PC-3 (cell line): ENCODE measurements at regions of chr2 and their contacts with region 1.

Region 1: GRCh38 chr2:178870703-178871102 is 63.5 kb upstream of the TTN start:
- DNase-seq: peak; percentile 82
- ATAC-seq: peak; percentile 76
- H3K4me3 ChIP-seq: no peak overlapping the region
- H3K27ac ChIP-seq: peak overlapping the region; percentile 4; the same call in 1 of the 2 replicates
- H3K4me1 ChIP-seq: peaks cover 48% of the 10 kb centered on the region
- H3K27me3 ChIP-seq: no peaks in the 10 kb centered on the region
- CTCF ChIP-seq: no peak

Region 2: DNA sequence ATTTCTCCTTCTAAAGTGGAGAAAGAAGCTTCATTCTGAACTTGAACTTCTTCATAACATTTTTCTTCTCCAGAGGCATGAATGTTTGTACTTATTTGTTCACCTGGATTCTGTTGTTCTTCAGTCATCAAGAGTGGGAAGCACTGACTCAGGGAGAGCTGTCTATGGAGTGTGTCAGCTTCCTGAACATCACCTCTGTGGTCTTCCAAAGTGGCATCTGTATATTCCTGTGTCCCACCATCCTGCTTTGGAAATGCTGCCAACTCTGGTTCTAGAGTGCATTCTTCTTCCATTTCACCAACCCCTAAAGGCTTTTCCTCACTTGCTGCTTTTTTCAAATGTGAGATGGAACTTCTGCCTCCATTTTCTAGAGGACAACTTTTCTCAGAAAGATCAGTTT is 122.9 kb before region 1 on chr2:
- CTCF ChIA-PET with region 1: no interaction called
- POLR2A ChIA-PET with region 1: no interaction called
- intact Hi-C with region 1: no loop called
- DNase-seq: peak; percentile 77
- ATAC-seq: peak; percentile 73
- H3K4me3 ChIP-seq: no peak overlapping the region
- H3K27ac ChIP-seq: no peak overlapping the region
- H3K4me1 ChIP-seq: peaks cover 12% of the 10 kb centered on the region
- H3K27me3 ChIP-seq: peaks cover 13% of the 10 kb centered on the region; the same call in 1 of the 2 replicates
- CTCF ChIP-seq: no peak

Region 3: GRCh38 chr2:178805457-178805856 is 65.2 kb before region 1 on chr2:
- CTCF ChIA-PET with region 1: no interaction called
- POLR2A ChIA-PET with region 1: interaction called, 30 read pairs
- intact Hi-C with region 1: no loop called
- DNase-seq: no peak
- ATAC-seq: no peak
- H3K4me3 ChIP-seq: no peak overlapping the region
- H3K27ac ChIP-seq: no peak overlapping the region
- H3K4me1 ChIP-seq: no peaks in the 10 kb centered on the region
- H3K27me3 ChIP-seq: no peaks in the 10 kb centered on the region
- CTCF ChIP-seq: no peak

Region 4: GRCh38 chr2:178830451-178830850 is 40.3 kb before region 1 on chr2:
- CTCF ChIA-PET with region 1: no interaction called
- POLR2A ChIA-PET with region 1: no interaction called
- intact Hi-C with region 1: loop called (anchors 2 kb)
- DNase-seq: peak; percentile 49
- ATAC-seq: peak; percentile 77
- H3K4me3 ChIP-seq: no peak overlapping the region; the same call in 1 of the 2 replicates
- H3K27ac ChIP-seq: peak overlapping the region; percentile 68
- H3K4me1 ChIP-seq: peaks cover 23% of the 10 kb centered on the region
- H3K27me3 ChIP-seq: no peaks in the 10 kb centered on the region
- CTCF ChIP-seq: no peak

Region 5: DNA sequence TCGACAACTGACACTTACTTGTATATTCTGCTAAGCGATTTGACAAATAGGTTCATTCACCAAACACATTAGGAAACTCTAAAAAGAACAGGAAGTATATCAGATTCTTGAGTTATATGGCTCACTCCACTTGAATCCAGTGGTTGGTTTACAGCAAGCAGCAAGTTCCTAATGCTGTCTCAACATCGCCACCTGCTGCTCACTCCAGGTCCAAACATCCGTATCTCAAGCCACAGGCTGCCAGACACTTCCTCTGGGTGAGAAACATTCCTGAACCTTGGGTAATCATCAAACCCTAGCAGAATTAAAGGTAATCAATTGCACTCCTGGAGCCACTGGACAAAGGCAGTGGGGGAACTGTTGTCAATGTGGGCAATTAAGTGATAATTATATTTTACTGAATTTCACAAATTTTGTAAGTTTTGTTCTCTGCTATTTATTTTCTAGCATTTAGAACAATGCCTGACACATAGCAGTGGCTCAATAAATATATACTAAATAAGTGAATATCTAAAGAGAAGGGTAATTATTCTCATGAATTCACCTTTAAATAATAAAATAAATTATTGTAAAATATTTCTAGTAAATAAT is 43.7 kb after region 1 on chr2:
- CTCF ChIA-PET with region 1: no interaction called
- POLR2A ChIA-PET with region 1: no interaction called
- intact Hi-C with region 1: loop called (anchors 5 kb)
- DNase-seq: peak; percentile 92
- ATAC-seq: peak; percentile 59
- H3K4me3 ChIP-seq: no peak overlapping the region
- H3K27ac ChIP-seq: no peak overlapping the region
- H3K4me1 ChIP-seq: peaks cover 52% of the 10 kb centered on the region
- H3K27me3 ChIP-seq: no peaks in the 10 kb centered on the region
- CTCF ChIP-seq: peak; percentile 94